ENCODE measurements at regions of chr7 and their contacts with region 1.

Region 1: DNA sequence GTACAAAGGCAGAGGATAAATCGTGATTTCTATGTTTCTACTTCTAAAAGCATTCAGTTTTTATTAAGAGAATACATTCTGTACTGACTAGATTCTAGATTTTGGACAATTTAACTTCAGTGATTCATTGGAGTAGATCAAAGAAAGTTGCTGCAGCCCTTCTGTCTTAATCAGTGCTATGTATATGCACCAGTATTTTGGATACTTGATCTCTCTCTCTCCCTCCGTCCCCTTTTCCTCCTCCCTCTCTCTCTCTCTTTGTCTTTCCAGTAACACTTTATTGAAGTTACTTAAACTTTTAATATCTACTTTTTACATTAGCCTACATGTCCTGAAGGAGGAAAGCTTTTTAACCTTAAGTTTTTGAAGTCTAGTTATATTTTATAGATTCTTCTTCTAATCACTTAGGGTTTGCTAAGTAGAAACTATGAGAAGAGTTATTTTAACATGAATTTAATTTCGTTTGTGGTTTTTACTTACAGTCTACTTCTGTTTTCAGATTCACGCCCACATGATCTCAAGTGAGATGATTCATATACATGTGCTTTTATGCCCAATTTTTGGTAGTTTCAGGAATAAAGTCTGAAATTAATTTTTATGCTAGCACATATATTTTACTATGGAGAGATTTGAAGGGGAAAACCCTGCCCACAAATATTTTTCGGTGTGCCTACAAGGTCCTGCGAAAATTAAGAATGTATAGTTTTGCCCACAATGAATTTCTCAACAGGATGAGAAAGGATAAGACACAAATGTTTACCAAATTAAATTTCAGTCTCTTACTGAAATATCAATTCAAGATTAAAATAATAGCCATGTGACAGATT is 9.1 kb downstream of the MDFIC start:
- DNase-seq: peak in 3 of 14 experiments; percentile 44 to 59 (median 53)
- ATAC-seq: peak; percentile 56
- H3K4me3 ChIP-seq: peak overlapping the region; percentile 41
- H3K4me3 Mint-ChIP-seq: peak overlapping the region; percentile 85
- H3K27ac ChIP-seq: peak overlapping the region; percentile 48 to 65
- H3K27ac Mint-ChIP-seq: no peak overlapping the region
- H3K4me1 ChIP-seq: peaks cover 31% of the 10 kb centered on the region
- H3K4me1 Mint-ChIP-seq: peaks cover 38% of the 10 kb centered on the region
- H3K27me3 ChIP-seq: no peaks in the 10 kb centered on the region
- H3K27me3 Mint-ChIP-seq: no peaks in the 10 kb centered on the region
- CTCF ChIP-seq: no peak

Region 2: DNA sequence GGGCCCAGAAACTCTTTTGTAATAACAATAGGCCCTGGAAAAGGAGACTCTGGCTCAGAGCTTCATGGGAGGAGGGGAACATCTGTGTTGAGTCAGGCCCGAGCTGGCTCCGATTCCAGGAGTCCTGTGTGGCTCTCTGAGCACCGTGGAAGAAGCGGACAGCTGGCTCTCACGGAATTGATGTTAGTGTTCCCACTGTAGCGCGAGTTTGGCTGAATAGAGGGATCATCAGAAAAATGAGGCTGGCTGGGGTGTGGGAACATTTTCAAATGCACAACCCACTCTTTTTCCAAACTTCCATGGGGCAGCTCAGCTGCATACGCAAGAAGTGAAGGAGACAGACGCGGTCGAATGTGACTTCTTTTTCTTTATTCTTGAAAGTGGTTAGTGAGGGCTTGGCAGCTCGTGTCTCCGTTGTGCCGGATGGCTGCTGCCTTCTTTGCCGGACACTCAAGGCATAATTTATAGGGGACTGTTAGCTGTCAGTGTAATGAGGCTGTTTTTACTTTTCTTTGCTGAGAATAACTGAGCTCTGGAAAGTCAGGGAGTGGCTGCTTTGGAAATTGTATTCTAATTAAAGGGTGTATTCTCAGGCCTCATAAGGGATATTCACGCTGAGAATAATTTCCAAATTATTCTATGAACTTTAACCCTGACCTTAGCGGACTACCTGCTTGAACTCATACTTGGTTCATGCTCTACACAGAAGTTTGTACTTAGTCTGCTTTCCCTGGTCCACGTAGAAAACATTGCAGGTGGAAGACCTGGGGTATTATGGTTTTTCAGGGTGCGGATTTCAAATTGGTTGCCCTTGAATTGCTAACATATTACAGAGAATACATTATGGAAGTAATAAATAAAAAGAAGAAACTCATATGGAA is 13.9 kb after region 1 on chr7:
- CTCF ChIA-PET with region 1: interaction called, 4 read pairs
- POLR2A ChIA-PET with region 1: interaction called, 3 read pairs
- intact Hi-C with region 1: loop called (anchors 2 kb)
- DNase-seq: no peak
- ATAC-seq: no peak
- H3K4me3 ChIP-seq: no peak overlapping the region
- H3K4me3 Mint-ChIP-seq: no peak overlapping the region
- H3K27ac ChIP-seq: no peak overlapping the region
- H3K27ac Mint-ChIP-seq: no peak overlapping the region
- H3K4me1 ChIP-seq: peaks cover 22% of the 10 kb centered on the region
- H3K4me1 Mint-ChIP-seq: peaks cover 69% of the 10 kb centered on the region
- H3K27me3 ChIP-seq: no peaks in the 10 kb centered on the region
- H3K27me3 Mint-ChIP-seq: no peaks in the 10 kb centered on the region
- CTCF ChIP-seq: no peak

Region 3: DNA sequence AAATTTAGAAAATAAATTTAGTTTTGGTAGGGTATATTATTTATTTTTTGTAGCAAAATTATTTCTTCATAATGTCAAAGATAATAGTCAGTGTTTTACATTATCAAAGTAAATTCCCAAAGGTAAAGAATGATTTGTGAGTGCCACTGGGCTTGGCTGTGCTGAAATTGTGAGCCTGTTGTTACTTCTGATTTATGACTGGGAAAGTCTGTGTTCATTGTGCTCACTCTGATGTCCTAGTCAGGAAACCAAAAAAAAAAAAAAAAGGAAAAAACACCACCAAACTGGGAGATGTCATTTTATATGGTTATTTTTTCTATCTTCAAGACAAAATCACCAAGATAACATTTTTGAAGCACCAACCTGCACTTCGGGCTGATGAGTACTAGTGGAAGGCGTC is 35.1 kb after region 1 on chr7:
- CTCF ChIA-PET with region 1: no interaction called
- POLR2A ChIA-PET with region 1: no interaction called
- intact Hi-C with region 1: loop called (anchors 5 to 10 kb)
- DNase-seq: no peak
- ATAC-seq: no peak
- H3K4me3 ChIP-seq: no peak overlapping the region
- H3K4me3 Mint-ChIP-seq: no peak overlapping the region
- H3K27ac ChIP-seq: no peak overlapping the region
- H3K27ac Mint-ChIP-seq: no peak overlapping the region
- H3K4me1 ChIP-seq: peaks cover 28% of the 10 kb centered on the region
- H3K4me1 Mint-ChIP-seq: peaks cover 82% of the 10 kb centered on the region
- H3K27me3 ChIP-seq: no peaks in the 10 kb centered on the region
- H3K27me3 Mint-ChIP-seq: no peaks in the 10 kb centered on the region
- CTCF ChIP-seq: no peak